ENCODE measurements at regions of chr1 and their contacts with region 1.

Region 1: GRCh38 chr1:28642847-28643635 is at the start of gene TAF12:
- DNase-seq: peak; percentile 81 to 97 (median 86)

Region 2: GRCh38 chr1:28602536-28603439 is 40.3 kb before region 1 on chr1:
- intact Hi-C with region 1: no loop called
- DNase-seq: peak in 6 of 10 donors; percentile 55 to 84 (median 66)

Region 3: GRCh38 chr1:28736450-28737306 is 93.6 kb after region 1 on chr1 and contains the start of gene YTHDF2:
- intact Hi-C with region 1: loop called (anchors 1 kb)
- DNase-seq: peak; percentile 92 to 99 (median 95)